HCT116 (cell line): ENCODE measurements at regions of chr11 and their contacts with region 1.

Region 1: DNA sequence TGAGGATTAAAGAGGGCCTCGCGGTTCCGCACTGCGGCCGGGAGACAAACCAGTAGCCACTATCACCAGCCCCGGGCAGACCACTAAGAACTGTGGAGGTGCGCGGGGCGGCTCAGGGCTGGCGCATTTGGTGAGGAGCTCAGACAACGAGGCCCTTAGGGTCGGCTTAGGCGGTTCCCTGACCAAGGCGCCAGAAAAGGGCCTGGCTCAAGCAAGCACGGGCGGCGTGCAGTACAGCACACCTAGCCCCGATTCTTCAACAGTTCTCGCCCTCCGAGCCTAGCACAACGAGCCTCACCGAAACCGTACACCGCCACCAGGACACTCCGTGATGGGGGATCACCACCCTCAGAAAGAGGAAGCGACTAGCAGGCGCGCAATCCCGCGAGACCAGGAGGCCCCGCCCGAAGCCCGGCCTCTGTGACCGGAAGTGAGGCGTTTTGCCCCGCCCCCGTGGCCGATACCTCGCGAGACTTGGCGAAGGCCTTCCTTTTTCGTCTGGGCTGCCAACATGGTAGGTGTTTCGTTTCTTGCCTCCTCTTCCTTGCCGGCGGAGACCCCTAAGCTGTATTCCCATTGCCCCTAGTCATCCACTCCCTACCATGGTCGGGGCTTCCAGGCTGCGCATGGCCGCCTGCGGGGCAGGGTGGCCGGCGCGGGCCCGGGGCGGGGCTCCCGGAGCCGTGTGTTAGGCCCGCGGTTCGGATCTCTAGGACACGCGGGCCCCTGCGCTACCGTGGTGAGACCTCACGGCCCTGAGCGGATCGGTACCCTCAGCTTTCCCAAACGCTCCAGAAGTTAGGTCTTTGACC is at the starts of genes RPL27A and TRIM66:
- DNase-seq: peak; percentile 90
- ATAC-seq: peak; percentile 89
- H3K4me3 ChIP-seq: peak within 1 kb of the TSS; percentile 76 to 93
- H3K27ac ChIP-seq: peak within 1 kb of the TSS; percentile 97
- H3K4me1 ChIP-seq: peaks cover 21 to 42% of the 10 kb centered on the region in 2 experiments
- H3K27me3 ChIP-seq: no peaks in the 10 kb centered on the region
- CTCF ChIP-seq: no peak
- POLR2A ChIP-seq: peak; percentile 96
- RAD21 ChIP-seq: no peak
- total RNA-seq, gene RPL27A: 1,055 TPM
- total RNA-seq, gene TRIM66: 24.8 TPM

Region 2: DNA sequence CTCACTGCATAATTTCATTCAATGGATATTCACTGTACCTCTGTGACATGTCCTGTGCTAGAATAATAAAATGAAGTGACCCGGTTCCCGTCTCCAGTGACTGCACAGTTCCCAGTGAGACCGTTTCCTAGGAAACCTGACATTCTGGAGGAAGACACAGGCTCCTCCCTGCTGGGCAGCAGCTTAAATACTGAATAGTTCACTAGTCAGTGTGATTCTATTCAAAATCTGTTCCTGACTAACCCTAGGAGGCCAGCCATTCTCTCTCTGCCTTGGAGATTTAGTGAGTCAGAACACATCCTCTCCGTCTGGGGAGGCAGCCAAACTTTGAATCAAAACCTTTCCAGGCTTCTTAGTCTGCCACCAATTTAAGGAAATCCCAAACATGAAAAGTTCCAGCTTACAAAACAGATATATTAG is 11.3 kb before region 1 on chr11:
- CTCF ChIA-PET with region 1: no interaction called
- POLR2A ChIA-PET with region 1: interaction called, 14 read pairs
- RAD21 ChIA-PET with region 1: no interaction called
- intact Hi-C with region 1: no loop called
- DNase-seq: no peak
- ATAC-seq: peak; percentile 44
- H3K4me3 ChIP-seq: no peak overlapping the region
- H3K27ac ChIP-seq: no peak overlapping the region; the same call in 1 of the 2 replicates
- H3K4me1 ChIP-seq: peaks cover 0 to 27% of the 10 kb centered on the region in 2 experiments; a peak in 2 of 4 replicates
- H3K27me3 ChIP-seq: no peaks in the 10 kb centered on the region
- CTCF ChIP-seq: no peak
- POLR2A ChIP-seq: no peak
- RAD21 ChIP-seq: no peak

Region 3: GRCh38 chr11:8732748-8733241 is 50.3 kb after region 1 on chr11:
- CTCF ChIA-PET with region 1: no interaction called
- POLR2A ChIA-PET with region 1: no interaction called
- RAD21 ChIA-PET with region 1: no interaction called
- intact Hi-C with region 1: no loop called
- DNase-seq: no peak
- ATAC-seq: peak; percentile 69
- H3K4me3 ChIP-seq: no peak overlapping the region
- H3K27ac ChIP-seq: no peak overlapping the region
- H3K4me1 ChIP-seq: peaks cover 9 to 31% of the 10 kb centered on the region in 2 experiments
- H3K27me3 ChIP-seq: no peaks in the 10 kb centered on the region
- CTCF ChIP-seq: no peak
- POLR2A ChIP-seq: no peak
- RAD21 ChIP-seq: no peak